ENCODE measurements at regions of chr13 and their contacts with region 1.

Region 1: GRCh38 chr13:94210816-94211215 is 268.7 kb downstream of the DCT start:
- DNase-seq: no peak
- H3K27ac ChIP-seq: no peak overlapping the region
- CTCF ChIP-seq: no peak

Region 2: DNA sequence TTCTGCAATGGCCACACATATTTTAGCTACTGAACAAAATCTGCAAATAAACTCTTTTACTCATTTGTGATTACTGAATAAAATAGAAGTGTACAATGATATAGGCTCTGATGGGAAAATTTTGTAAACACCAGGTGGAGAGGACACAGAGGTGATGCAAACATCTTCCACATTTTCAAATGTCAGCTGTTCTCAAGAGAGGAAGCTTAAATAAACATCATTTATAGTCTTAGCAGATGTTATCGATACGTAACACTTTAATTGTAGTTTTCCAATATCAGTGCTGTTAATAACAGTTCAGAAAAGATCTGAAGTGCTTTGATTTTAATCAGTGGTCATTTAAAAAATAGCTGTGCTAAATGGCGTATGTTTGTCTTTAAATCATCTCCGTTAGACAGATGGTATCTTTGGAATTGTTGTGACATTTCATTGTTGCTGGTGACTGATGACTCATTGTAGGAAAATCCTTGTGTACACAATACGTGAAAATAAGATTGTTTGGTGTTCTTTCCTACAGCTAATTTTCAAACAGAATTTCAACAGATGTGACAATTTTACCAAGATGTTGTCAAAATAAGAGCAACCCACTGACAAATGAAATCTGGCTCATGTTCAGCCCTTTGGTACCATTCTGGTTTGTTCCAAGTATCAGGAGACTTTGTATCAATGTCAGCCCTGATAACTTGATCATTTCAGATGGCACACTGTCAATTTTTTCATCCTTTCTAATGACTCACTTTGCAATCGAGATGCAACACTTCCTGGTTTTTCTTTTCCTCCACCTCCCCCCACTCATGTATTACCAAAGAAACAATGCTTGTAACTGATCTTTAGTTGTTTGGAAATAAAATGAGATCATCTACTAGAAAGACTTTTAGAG is 247.3 kb before region 1 on chr13:
- CTCF ChIA-PET with region 1: interaction called, 11 read pairs
- POLR2A ChIA-PET with region 1: no interaction called
- DNase-seq: no peak
- H3K27ac ChIP-seq: no peak overlapping the region
- CTCF ChIP-seq: no peak